Lower leg skin (tissue), 4 donors: ENCODE measurements at regions of chr6 and their contacts with region 1.

Region 1: GRCh38 chr6:81929828-81930227 is 177.3 kb upstream of the TENT5A start:
- DNase-seq: no peak
- H3K4me3 ChIP-seq: no peak overlapping the region
- CTCF ChIP-seq: no peak
- POLR2A ChIP-seq: no peak

Region 2: DNA sequence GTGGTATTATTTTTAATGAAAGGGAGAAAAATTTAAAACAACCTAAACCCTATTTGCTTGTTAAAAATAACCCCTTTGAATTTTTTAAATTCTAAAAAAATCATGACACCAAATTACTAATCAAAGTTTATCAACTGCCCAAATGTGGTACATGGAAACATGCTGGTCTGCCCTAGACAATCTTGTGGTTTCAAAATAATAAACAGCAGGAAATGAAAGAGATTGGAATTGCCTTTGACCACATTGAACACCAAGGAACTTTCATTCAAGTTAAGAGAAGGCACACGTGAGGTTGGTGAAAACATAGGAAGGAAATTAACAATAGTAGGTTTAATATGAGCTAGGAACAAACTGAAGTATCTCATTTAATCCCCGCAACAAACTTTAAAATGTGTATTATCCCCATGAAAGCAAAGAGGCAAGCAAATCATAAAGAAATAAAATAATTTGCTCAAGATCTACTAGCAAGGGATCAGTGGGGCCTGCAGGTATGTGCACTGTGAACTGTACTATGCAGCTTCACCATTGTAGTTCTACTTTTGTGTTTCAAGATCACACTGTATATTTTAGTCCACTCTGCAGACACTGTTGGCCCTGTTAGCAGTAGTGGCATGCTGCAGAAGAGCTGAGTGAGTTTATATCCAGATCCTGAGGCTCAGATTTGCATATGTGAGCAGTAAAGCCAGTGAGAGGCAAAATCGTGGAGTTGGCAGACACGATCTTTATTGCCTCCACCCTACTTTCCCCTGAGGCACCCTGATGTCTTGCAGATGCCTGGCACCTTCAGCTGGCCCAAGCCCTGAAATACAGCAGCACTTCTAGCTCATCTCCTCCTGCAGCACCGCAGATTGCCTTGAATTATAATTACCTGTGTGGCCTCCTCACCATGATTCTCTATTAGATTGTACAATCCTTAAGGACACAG is 19.6 kb before region 1 on chr6:
- intact Hi-C with region 1: loop called (anchors 2 kb)
- DNase-seq: peak in 1 of 2 donors; percentile 56
- H3K4me3 ChIP-seq: no peak overlapping the region
- CTCF ChIP-seq: no peak
- POLR2A ChIP-seq: no peak